Endothelial cell of umbilical vein (primary cell): ENCODE measurements at regions of chr2 and their contacts with region 1.

Region 1: GRCh38 chr2:239991689-239992314 is 33.3 kb downstream of the NDUFA10 start:
- DNase-seq: peak; percentile 64
- H3K4me3 ChIP-seq: no peak overlapping the region
- H3K27ac ChIP-seq: no peak overlapping the region
- H3K4me1 ChIP-seq: no peaks in the 10 kb centered on the region
- H3K27me3 ChIP-seq: no peaks in the 10 kb centered on the region
- CTCF ChIP-seq: peak; percentile 60 to 61
- POLR2A ChIP-seq: no peak

Region 2: GRCh38 chr2:239035361-239036078 is 956.3 kb before region 1 on chr2:
- CTCF ChIA-PET with region 1: no interaction called
- POLR2A ChIA-PET with region 1: no interaction called
- dilution Hi-C with region 1: no loop called
- intact Hi-C with region 1: loop called (anchors 1 kb)
- DNase-seq: no peak
- H3K4me3 ChIP-seq: no peak overlapping the region
- H3K27ac ChIP-seq: no peak overlapping the region
- H3K4me1 ChIP-seq: no peaks in the 10 kb centered on the region
- H3K27me3 ChIP-seq: peaks cover 0 to 3% of the 10 kb centered on the region in 2 experiments
- CTCF ChIP-seq: peak; percentile 38 to 92
- POLR2A ChIP-seq: no peak

Region 3: GRCh38 chr2:239106314-239106908 is 885.4 kb before region 1 on chr2:
- CTCF ChIA-PET with region 1: interaction called, 3 read pairs
- POLR2A ChIA-PET with region 1: no interaction called
- dilution Hi-C with region 1: no loop called
- intact Hi-C with region 1: loop called (anchors 1 kb)
- DNase-seq: peak; percentile 59
- H3K4me3 ChIP-seq: no peak overlapping the region
- H3K27ac ChIP-seq: no peak overlapping the region
- H3K4me1 ChIP-seq: no peaks in the 10 kb centered on the region
- H3K27me3 ChIP-seq: no peaks in the 10 kb centered on the region
- CTCF ChIP-seq: peak; percentile 42 to 80
- POLR2A ChIP-seq: no peak

Region 4: GRCh38 chr2:239143858-239144718 is 847.7 kb before region 1 on chr2:
- CTCF ChIA-PET with region 1: interaction called, 4 read pairs
- POLR2A ChIA-PET with region 1: no interaction called
- dilution Hi-C with region 1: no loop called
- intact Hi-C with region 1: loop called (anchors 2 kb)
- DNase-seq: peak; percentile 37
- H3K4me3 ChIP-seq: no peak overlapping the region
- H3K27ac ChIP-seq: no peak overlapping the region
- H3K4me1 ChIP-seq: no peaks in the 10 kb centered on the region
- H3K27me3 ChIP-seq: no peaks in the 10 kb centered on the region
- CTCF ChIP-seq: peak; percentile 59 to 72
- POLR2A ChIP-seq: no peak

Region 5: DNA sequence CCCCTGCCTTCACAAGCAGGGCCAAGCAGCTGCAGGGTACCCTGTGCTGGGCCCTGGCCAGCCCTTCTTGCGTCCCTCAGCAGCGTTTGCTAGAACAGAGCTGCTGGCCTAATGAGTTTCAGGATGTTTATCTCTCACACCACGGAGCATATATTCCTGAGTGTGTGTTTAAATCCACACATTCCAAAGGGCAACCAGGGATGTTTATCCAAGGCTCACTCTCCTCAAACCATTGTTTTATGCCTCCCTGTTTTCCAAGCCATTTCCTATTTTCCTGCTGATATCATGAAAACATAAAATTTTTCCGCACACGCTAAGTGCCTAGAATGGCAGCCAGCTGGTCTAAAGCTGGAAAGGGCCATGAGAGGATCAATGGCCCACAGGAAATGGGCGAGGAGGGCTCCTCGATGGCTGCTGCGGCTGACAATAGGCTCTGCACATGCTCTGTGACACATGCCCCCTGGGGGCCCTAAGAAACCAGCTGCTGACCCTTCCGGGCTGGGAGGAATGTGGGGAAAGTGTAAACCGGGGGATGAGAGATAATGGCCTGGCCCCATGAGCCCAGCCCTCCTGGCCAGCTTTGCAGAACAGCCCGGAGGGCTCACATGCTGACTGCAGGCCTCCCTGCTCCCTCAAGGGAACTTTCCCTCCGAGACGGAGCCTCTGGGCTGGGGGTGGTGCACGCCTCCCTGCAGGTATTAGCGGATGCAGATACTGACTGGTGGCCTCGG is 160.6 kb before region 1 on chr2:
- CTCF ChIA-PET with region 1: no interaction called
- POLR2A ChIA-PET with region 1: no interaction called
- dilution Hi-C with region 1: no loop called
- intact Hi-C with region 1: loop called (anchors 1 kb)
- DNase-seq: peak; percentile 67
- H3K4me3 ChIP-seq: no peak overlapping the region
- H3K27ac ChIP-seq: peak overlapping the region; percentile 59
- H3K4me1 ChIP-seq: peaks cover 12% of the 10 kb centered on the region
- H3K27me3 ChIP-seq: no peaks in the 10 kb centered on the region
- CTCF ChIP-seq: no peak
- POLR2A ChIP-seq: no peak